Activated CD4-positive, alpha-beta T cell treated with anti-CD3 and anti-CD28 coated beads for 36 hours (primary cell): ENCODE measurements at regions of chr1 and their contacts with region 1.

Region 1: GRCh38 chr1:160539990-160540858 is 17.2 kb upstream of the SLAMF6 start:
- DNase-seq: peak; percentile 62
- ATAC-seq: peak; percentile 88
- H3K4me3 Mint-ChIP-seq: peak overlapping the region; percentile 47
- H3K27ac Mint-ChIP-seq: peak overlapping the region; percentile 92
- H3K4me1 Mint-ChIP-seq: peaks cover 63% of the 10 kb centered on the region
- H3K27me3 Mint-ChIP-seq: no peaks in the 10 kb centered on the region

Region 2: DNA sequence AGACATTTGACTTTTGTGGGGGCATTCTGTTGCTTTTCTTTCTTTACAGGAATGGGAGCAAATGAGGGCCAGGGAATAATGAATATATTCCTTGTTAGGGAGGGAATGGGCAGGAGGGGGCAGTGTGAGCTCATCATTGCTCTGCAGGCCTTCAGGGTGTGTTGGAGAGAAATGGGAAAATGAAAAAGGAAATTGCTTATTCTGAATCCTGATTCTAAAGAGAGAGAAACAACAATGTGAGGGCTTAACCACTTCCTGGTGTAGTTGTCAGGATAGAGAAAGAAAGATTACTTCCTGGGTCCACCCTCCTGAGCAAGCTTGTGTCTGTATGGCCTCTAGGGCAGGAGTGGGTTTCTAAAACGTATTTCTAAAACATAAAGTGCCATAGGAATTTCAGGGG is 111.6 kb before region 1 on chr1:
- CTCF ChIA-PET with region 1: interaction called, 10 read pairs
- POLR2A ChIA-PET with region 1: no interaction called
- intact Hi-C with region 1: loop called (anchors 2 to 5 kb)
- DNase-seq: peak; percentile 60
- ATAC-seq: peak; percentile 51
- H3K4me3 Mint-ChIP-seq: peak overlapping the region; percentile 32
- H3K27ac Mint-ChIP-seq: peak overlapping the region; percentile 94
- H3K4me1 Mint-ChIP-seq: peaks cover 63% of the 10 kb centered on the region
- H3K27me3 Mint-ChIP-seq: no peaks in the 10 kb centered on the region

Region 3: GRCh38 chr1:160500266-160501020 is 39.8 kb before region 1 on chr1:
- CTCF ChIA-PET with region 1: interaction called, 3 read pairs
- POLR2A ChIA-PET with region 1: interaction called, 10 read pairs
- intact Hi-C with region 1: no loop called
- DNase-seq: no peak
- ATAC-seq: no peak
- H3K4me3 Mint-ChIP-seq: no peak overlapping the region
- H3K27ac Mint-ChIP-seq: no peak overlapping the region
- H3K4me1 Mint-ChIP-seq: peaks cover 67% of the 10 kb centered on the region
- H3K27me3 Mint-ChIP-seq: no peaks in the 10 kb centered on the region

Region 4: GRCh38 chr1:160550572-160551034 is 10.4 kb after region 1 on chr1:
- CTCF ChIA-PET with region 1: interaction called, 11 read pairs
- POLR2A ChIA-PET with region 1: no interaction called
- intact Hi-C with region 1: no loop called
- DNase-seq: peak; percentile 83
- ATAC-seq: peak; percentile 93
- H3K4me3 Mint-ChIP-seq: no peak overlapping the region
- H3K27ac Mint-ChIP-seq: peak overlapping the region; percentile 48
- H3K4me1 Mint-ChIP-seq: peaks cover 7% of the 10 kb centered on the region
- H3K27me3 Mint-ChIP-seq: no peaks in the 10 kb centered on the region

Region 5: GRCh38 chr1:160567858-160568682 is 27.8 kb after region 1 on chr1:
- CTCF ChIA-PET with region 1: interaction called, 8 read pairs
- POLR2A ChIA-PET with region 1: no interaction called
- intact Hi-C with region 1: loop called in 1 of 2 experiments (anchors 2 kb)
- DNase-seq: peak; percentile 79
- ATAC-seq: peak; percentile 95
- H3K4me3 Mint-ChIP-seq: peak overlapping the region; percentile 60
- H3K27ac Mint-ChIP-seq: peak overlapping the region; percentile 96
- H3K4me1 Mint-ChIP-seq: peaks cover 89% of the 10 kb centered on the region
- H3K27me3 Mint-ChIP-seq: no peaks in the 10 kb centered on the region

Region 6: DNA sequence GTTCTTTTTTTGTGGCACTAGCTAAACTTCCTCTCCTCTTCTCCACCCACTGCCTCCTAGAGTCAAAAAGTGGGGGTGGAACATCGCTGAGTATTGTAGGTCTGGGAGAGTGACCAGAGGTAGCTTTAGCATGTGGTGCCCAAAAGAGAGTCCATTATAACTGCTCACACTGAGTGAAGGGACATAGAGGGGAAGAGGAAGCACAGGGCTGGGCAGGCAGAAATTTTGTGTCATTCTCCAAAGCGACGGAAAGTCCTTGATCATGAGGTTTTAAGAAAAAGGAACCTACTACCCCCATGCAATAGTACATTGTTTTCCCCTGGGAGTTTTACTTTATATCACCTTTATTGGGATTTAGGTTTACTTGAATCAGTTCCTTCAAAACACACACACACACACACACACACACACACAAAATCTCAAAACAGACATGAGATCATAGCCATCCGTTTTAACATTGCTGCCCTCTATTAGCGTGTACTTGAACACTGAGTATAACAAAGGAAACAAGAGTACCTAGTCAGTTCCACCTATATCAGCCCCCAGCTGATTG is 35.0 kb after region 1 on chr1:
- CTCF ChIA-PET with region 1: interaction called, 8 read pairs
- POLR2A ChIA-PET with region 1: interaction called, 3 read pairs
- intact Hi-C with region 1: loop called in 1 of 2 experiments (anchors 5 kb)
- DNase-seq: peak; percentile 28
- ATAC-seq: peak; percentile 50
- H3K4me3 Mint-ChIP-seq: peak overlapping the region; percentile 77
- H3K27ac Mint-ChIP-seq: peak overlapping the region; percentile 96
- H3K4me1 Mint-ChIP-seq: peaks cover 89% of the 10 kb centered on the region
- H3K27me3 Mint-ChIP-seq: no peaks in the 10 kb centered on the region

Region 7: DNA sequence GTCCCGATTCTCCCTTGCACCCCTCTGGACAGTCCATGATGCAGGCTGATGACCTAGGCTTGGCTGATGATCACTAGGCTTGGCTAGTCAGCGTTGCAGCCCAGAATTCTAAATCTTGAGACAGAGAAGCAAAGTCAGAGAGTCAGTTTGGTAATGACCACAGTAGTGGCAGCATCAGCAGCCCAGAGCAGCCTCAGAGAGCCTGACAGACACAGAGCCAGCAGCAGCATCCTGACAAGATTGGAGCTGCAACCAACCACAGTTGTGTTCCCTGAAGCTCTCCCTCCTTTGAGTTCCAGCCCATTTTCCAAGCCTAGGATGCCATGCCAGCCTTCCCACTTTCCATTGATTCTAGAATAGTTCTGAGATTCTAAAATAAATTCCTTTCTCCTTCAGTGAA is 361.5 kb after region 1 on chr1:
- CTCF ChIA-PET with region 1: no interaction called
- POLR2A ChIA-PET with region 1: no interaction called
- intact Hi-C with region 1: no loop called
- DNase-seq: no peak
- ATAC-seq: no peak
- H3K4me3 Mint-ChIP-seq: no peak overlapping the region
- H3K27ac Mint-ChIP-seq: no peak overlapping the region
- H3K4me1 Mint-ChIP-seq: no peaks in the 10 kb centered on the region
- H3K27me3 Mint-ChIP-seq: peaks cover 9% of the 10 kb centered on the region